SK-N-SH (cell line): ENCODE measurements at regions of chr9 and their contacts with region 1.

Region 1: DNA sequence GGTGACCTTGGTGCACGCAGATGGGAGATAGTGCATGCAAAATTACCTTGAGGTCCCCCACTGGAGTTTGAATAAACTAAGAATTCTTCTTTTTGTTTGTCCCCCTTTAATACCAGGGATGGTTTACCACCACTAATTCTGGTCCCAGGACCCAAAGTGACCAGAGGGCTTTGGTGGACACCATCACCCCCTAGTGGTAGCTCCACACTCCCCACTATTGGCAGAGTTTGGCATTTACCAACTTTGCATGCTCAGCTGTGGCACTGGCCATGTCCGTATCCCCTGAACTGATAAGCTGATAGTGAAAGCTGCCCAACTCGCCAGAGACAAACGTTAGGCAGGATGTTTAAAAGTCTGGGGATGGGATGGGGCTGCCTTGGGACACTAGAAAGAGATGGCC is 3.3 kb downstream of the ASTN2 start:
- DNase-seq: peak; percentile 74
- H3K4me3 ChIP-seq: peak overlapping the region in 1 of 2 experiments; percentile 23; a peak in 2 of 4 replicates
- H3K27ac ChIP-seq: peak overlapping the region in 1 of 2 experiments; percentile 73; a peak in 1 of 4 replicates
- H3K4me1 ChIP-seq: peaks cover 0 to 41% of the 10 kb centered on the region in 2 experiments; a peak in 2 of 4 replicates
- H3K27me3 ChIP-seq: peaks cover 33% of the 10 kb centered on the region
- CTCF ChIP-seq: peak; percentile 65
- EP300 ChIP-seq: peak in 1 of 2 experiments; percentile 36; a peak in 1 of 4 replicates
- RAD21 ChIP-seq: peak; percentile 89

Region 2: DNA sequence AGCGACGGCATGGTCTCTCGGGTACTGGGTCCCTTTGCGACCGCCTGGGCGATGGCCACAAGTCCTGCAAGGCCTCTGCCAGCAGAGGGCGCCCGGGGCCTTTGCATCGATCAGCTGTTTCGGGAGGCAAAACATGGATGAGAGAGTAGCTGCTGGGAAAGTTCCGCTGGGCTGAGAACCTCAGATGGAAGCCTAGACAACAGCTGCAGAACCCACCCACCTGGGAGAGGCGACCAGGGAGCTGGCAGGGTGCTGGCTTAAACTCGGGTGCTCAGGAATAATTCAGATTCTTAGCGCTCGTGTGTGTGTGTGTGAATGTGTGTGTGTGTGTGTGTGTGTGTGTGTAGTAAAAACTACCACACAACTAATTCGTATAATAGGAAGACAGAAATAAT is 674.4 kb before region 1 on chr9:
- CTCF ChIA-PET with region 1: interaction called, 12 read pairs
- POLR2A ChIA-PET with region 1: interaction called, 3 read pairs
- DNase-seq: peak; percentile 83
- H3K4me3 ChIP-seq: no peak overlapping the region; a peak in 1 of 4 replicates
- H3K27ac ChIP-seq: no peak overlapping the region
- H3K4me1 ChIP-seq: no peaks in the 10 kb centered on the region; a peak in 1 of 4 replicates
- H3K27me3 ChIP-seq: no peaks in the 10 kb centered on the region
- CTCF ChIP-seq: peak; percentile 91
- EP300 ChIP-seq: no peak
- RAD21 ChIP-seq: peak; percentile 92

Region 3: GRCh38 chr9:117073539-117074341 is 337.8 kb before region 1 on chr9:
- CTCF ChIA-PET with region 1: interaction called, 18 read pairs
- POLR2A ChIA-PET with region 1: no interaction called
- DNase-seq: peak; percentile 78
- H3K4me3 ChIP-seq: peak overlapping the region in 1 of 2 experiments; percentile 52; a peak in 1 of 4 replicates
- H3K27ac ChIP-seq: peak overlapping the region in 1 of 2 experiments; percentile 78; a peak in 2 of 4 replicates
- H3K4me1 ChIP-seq: peaks cover 0 to 40% of the 10 kb centered on the region in 2 experiments; a peak in 2 of 4 replicates
- H3K27me3 ChIP-seq: no peaks in the 10 kb centered on the region
- CTCF ChIP-seq: peak; percentile 54
- EP300 ChIP-seq: no peak
- RAD21 ChIP-seq: peak; percentile 90

Region 4: DNA sequence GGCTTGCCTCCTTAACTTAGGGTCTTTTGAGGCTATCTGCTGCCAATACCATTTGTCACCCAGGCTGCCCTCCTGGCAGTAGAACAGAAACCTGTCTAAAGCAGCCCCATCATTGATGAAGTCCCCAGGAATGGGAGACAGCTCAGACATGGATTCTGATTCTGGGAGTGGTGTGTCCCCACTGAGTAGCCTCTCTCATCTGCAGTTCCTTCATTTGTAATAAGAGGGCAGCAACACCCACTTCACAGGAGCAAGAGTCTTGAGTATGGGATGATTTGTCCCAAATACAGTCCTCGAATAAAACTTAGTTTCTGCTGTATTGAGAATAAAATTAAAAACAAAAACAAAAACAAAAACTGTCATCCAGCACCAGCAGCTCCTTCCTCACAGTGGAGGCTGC is 164.3 kb before region 1 on chr9:
- CTCF ChIA-PET with region 1: interaction called, 20 read pairs
- POLR2A ChIA-PET with region 1: no interaction called
- DNase-seq: peak; percentile 38
- H3K4me3 ChIP-seq: no peak overlapping the region
- H3K27ac ChIP-seq: peak overlapping the region in 1 of 2 experiments; percentile 43; a peak in 2 of 4 replicates
- H3K4me1 ChIP-seq: peaks cover 0 to 22% of the 10 kb centered on the region in 2 experiments; a peak in 1 of 4 replicates
- H3K27me3 ChIP-seq: no peaks in the 10 kb centered on the region
- CTCF ChIP-seq: no peak; the same call in 1 of the 2 replicates
- EP300 ChIP-seq: no peak
- RAD21 ChIP-seq: peak; percentile 77

Region 5: GRCh38 chr9:117278471-117279035 is 133.0 kb before region 1 on chr9:
- CTCF ChIA-PET with region 1: interaction called, 38 read pairs
- POLR2A ChIA-PET with region 1: interaction called, 3 read pairs
- DNase-seq: peak; percentile 28
- H3K4me3 ChIP-seq: no peak overlapping the region; a peak in 1 of 4 replicates
- H3K27ac ChIP-seq: peak overlapping the region; percentile 30 to 98; a peak in 3 of 4 replicates
- H3K4me1 ChIP-seq: peaks cover 0 to 33% of the 10 kb centered on the region in 2 experiments; a peak in 2 of 4 replicates
- H3K27me3 ChIP-seq: no peaks in the 10 kb centered on the region
- CTCF ChIP-seq: no peak
- EP300 ChIP-seq: no peak
- RAD21 ChIP-seq: peak; percentile 28

Region 6: DNA sequence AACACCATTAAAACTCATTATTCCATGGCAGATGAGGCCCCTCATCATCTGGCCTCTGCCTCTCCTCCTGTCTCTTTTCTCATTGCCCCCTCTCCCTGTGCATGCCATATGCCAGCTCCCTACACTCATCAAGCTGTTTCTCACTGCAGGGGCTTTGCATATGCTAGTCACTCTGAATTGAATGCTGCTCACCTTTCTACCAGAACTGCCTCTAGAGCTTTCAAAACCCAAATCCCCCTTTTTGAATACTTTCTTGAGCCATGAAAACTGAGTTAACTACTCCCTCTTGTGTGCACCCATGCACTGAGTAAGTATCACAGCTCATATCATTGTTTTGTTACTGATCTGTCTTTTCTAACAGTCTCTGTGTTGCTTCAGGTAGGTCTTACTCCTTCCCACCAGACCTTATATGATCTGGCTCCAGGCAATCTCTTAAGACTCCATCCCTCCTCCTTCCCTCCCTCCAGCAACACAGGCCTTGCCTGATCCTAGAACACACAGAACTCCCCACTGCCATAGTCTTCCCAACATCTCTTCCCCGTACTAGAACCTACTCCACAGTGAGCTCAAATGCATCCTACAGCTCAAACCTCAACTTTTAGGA is 57.2 kb before region 1 on chr9:
- CTCF ChIA-PET with region 1: interaction called, 20 read pairs
- POLR2A ChIA-PET with region 1: interaction called, 7 read pairs
- DNase-seq: no peak
- H3K4me3 ChIP-seq: no peak overlapping the region
- H3K27ac ChIP-seq: peak overlapping the region in 1 of 2 experiments; percentile 97; a peak in 2 of 4 replicates
- H3K4me1 ChIP-seq: peaks cover 0 to 19% of the 10 kb centered on the region in 2 experiments; a peak in 2 of 4 replicates
- H3K27me3 ChIP-seq: no peaks in the 10 kb centered on the region
- CTCF ChIP-seq: no peak
- EP300 ChIP-seq: no peak
- RAD21 ChIP-seq: peak; percentile 61

Region 7: DNA sequence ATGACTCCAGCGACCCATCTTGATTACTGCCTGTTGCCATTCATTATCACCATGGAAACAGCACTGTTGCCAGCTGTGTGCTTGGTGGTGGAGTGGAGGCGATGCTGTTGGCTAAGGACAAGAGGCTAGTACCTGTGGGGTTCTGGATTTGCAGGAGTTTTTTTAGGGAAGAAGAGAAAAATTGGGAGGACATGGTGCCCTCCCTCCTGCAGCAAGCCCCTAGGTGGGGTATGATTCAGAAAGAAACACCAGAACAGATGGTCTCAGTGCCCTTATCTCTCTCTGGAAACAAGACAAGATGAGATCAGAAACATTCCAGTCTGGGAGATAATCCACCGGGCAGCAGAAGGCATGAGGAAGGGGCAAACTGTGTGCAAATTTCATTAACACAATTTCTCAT is 204.9 kb after region 1 on chr9:
- CTCF ChIA-PET with region 1: no interaction called
- POLR2A ChIA-PET with region 1: no interaction called
- DNase-seq: peak; percentile 61
- H3K4me3 ChIP-seq: no peak overlapping the region
- H3K27ac ChIP-seq: peak overlapping the region in 1 of 2 experiments; percentile 60; a peak in 2 of 4 replicates
- H3K4me1 ChIP-seq: peaks cover 0 to 6% of the 10 kb centered on the region in 2 experiments; a peak in 2 of 4 replicates
- H3K27me3 ChIP-seq: no peaks in the 10 kb centered on the region
- CTCF ChIP-seq: no peak
- EP300 ChIP-seq: no peak
- RAD21 ChIP-seq: no peak